ENCODE measurements at regions of chr1 and their contacts with region 1.

Region 1: GRCh38 chr1:17569200-17570161 is 30.0 kb downstream of the ARHGEF10L start:
- DNase-seq: peak; percentile 44
- ATAC-seq: 0 out of 3 replicates have a peak, but pooled peaks have one; percentile 6
- H3K4me3 ChIP-seq: peak overlapping the region; percentile 25 to 45 (median 35); a peak in 5 of 6 replicates
- H3K27ac ChIP-seq: no peak overlapping the region
- H3K4me1 ChIP-seq: peaks cover 77% of the 10 kb centered on the region
- H3K27me3 ChIP-seq: no peaks in the 10 kb centered on the region
- CTCF ChIP-seq: no peak
- EP300 ChIP-seq: no peak
- POLR2A ChIP-seq: no peak
- RAD21 ChIP-seq: no peak

Region 2: DNA sequence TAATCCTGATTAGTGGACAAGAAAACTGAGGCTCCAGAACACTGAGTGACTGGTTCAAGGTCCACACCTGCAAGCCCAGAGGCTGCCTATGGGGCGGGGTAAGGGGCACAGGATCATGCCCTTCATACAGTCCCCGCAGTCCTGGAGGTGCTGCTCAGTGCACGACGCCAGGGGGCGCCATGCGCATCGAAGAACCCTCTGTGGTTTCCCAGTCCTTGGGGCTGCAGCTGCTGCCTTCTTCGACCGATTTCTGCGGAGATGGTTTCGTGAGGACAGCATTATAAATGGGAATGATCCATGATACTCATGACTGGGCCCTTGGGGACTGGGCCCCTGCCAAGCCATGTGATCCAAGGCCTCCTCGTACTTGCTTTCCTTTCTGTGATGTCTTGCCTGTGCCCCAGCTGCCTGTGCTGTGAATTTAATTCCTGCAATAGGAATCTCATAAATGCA is 67.1 kb before region 1 on chr1:
- CTCF ChIA-PET with region 1: interaction called, 7 read pairs
- POLR2A ChIA-PET with region 1: interaction called, 3 read pairs
- in situ Hi-C with region 1: loop called (anchors 5 kb)
- intact Hi-C with region 1: no loop called
- DNase-seq: peak; percentile 56
- ATAC-seq: peak; percentile 97
- H3K4me3 ChIP-seq: no peak overlapping the region
- H3K27ac ChIP-seq: no peak overlapping the region
- H3K4me1 ChIP-seq: peaks cover 42% of the 10 kb centered on the region
- H3K27me3 ChIP-seq: peaks cover 0 to 6% of the 10 kb centered on the region in 2 experiments; a peak in 2 of 5 replicates
- CTCF ChIP-seq: peak; percentile 96
- EP300 ChIP-seq: no peak
- POLR2A ChIP-seq: no peak
- RAD21 ChIP-seq: peak; percentile 92

Region 3: GRCh38 chr1:17531682-17532487 is 37.6 kb before region 1 on chr1:
- CTCF ChIA-PET with region 1: no interaction called
- POLR2A ChIA-PET with region 1: no interaction called
- in situ Hi-C with region 1: no loop called
- intact Hi-C with region 1: no loop called
- DNase-seq: no peak
- ATAC-seq: no peak; the same call in 1 of the 3 replicates
- H3K4me3 ChIP-seq: no peak overlapping the region
- H3K27ac ChIP-seq: no peak overlapping the region
- H3K4me1 ChIP-seq: peaks cover 10% of the 10 kb centered on the region
- H3K27me3 ChIP-seq: peaks cover 2 to 19% of the 10 kb centered on the region in 2 experiments; a peak in 4 of 5 replicates
- CTCF ChIP-seq: no peak
- EP300 ChIP-seq: no peak
- POLR2A ChIP-seq: no peak
- RAD21 ChIP-seq: no peak

Measured in HepG2 (cell line).